Activated T-helper 2 cell treated with anti-CD3 and anti-CD28 coated beads, Interferon-gamma antibody, Interleukin-2, Interleukin-4, amounts not matched to agents 10 μg/mL and 5 μg/mL and 100 μg/mL, durations not matched to agents 14 hours and 24 hours and 36 hours (primary cell): ENCODE measurements at regions of chr3 and their contacts with region 1.

Region 1: GRCh38 chr3:60081381-60082095 is 1031.7 kb upstream of the CFAP20DC start:
- DNase-seq: no peak
- H3K4me3 Mint-ChIP-seq: peak overlapping the region; percentile 69
- H3K27ac Mint-ChIP-seq: peak overlapping the region; percentile 86
- H3K4me1 Mint-ChIP-seq: peaks cover 67% of the 10 kb centered on the region
- H3K27me3 Mint-ChIP-seq: no peaks in the 10 kb centered on the region

Region 2: GRCh38 chr3:59873576-59874230 is 207.8 kb before region 1 on chr3:
- intact Hi-C with region 1: loop called (anchors 5 kb)
- DNase-seq: no peak
- H3K4me3 Mint-ChIP-seq: no peak overlapping the region
- H3K27ac Mint-ChIP-seq: peak overlapping the region; percentile 9
- H3K4me1 Mint-ChIP-seq: peaks cover 52% of the 10 kb centered on the region
- H3K27me3 Mint-ChIP-seq: no peaks in the 10 kb centered on the region

Region 3: DNA sequence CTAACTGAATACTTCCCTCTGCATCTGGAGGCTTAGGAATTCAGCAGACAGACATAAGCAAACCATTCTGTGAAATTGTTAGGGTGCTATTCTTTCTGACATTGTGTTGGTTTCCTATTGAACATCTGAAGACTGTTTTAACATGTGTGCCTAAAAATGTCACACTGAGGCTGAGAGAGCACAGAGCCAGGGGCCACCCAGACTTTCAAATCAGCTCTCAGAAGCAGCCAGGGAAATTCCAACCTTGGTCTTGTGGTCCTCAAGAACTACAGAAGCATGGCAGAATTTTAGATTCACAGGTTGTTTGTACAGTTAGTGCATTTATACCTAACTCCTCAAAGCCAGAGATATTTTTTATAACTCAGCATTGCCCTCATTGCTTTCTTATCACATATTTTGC is 102.6 kb before region 1 on chr3:
- intact Hi-C with region 1: loop called (anchors 1 kb)
- DNase-seq: no peak
- H3K4me3 Mint-ChIP-seq: peak overlapping the region; percentile 35
- H3K27ac Mint-ChIP-seq: peak overlapping the region; percentile 92
- H3K4me1 Mint-ChIP-seq: peaks cover 26% of the 10 kb centered on the region
- H3K27me3 Mint-ChIP-seq: no peaks in the 10 kb centered on the region

Region 4: DNA sequence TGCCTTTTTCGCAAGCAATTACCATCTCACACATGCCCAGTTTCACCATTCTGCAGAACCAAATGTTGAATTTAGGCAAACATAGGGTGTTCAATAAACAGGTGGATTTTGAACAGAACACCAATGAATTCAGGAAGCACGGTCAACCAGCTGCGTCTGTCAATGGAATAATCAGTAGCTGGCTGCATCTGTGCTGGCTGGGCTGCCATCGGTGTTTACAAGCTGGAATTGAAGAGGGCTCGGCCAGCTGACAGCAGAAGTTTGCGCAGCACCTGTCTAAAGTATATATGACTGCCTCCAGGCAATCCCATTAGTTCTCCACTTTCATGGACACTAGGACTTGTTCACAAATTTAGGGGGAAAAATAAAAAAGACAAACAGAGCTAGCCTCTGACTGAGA is 35.3 kb before region 1 on chr3:
- intact Hi-C with region 1: loop called (anchors 1 kb)
- DNase-seq: no peak
- H3K4me3 Mint-ChIP-seq: no peak overlapping the region
- H3K27ac Mint-ChIP-seq: peak overlapping the region; percentile 61
- H3K4me1 Mint-ChIP-seq: peaks cover 62% of the 10 kb centered on the region
- H3K27me3 Mint-ChIP-seq: no peaks in the 10 kb centered on the region

Region 5: DNA sequence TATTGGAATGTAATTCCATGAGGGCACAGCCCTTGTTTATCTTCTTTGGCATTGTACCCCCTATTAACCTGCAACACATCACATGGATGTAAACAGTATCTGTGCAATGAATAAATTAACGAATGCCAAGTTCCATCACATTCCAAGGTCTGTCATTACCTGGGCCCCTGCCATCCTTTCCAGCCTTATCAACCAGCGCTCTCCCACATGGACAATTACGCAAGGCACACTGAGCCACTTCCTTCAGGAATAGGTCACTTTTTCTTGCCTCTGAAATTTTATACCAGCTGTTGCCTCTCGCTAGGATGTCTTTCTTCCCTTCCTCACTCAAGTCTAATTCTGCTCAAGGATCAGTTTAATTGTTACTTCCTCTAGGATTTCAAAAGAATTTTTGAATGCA is 20.1 kb after region 1 on chr3:
- intact Hi-C with region 1: loop called (anchors 2 kb)
- DNase-seq: no peak
- H3K4me3 Mint-ChIP-seq: no peak overlapping the region
- H3K27ac Mint-ChIP-seq: no peak overlapping the region
- H3K4me1 Mint-ChIP-seq: peaks cover 32% of the 10 kb centered on the region
- H3K27me3 Mint-ChIP-seq: no peaks in the 10 kb centered on the region

Region 6: DNA sequence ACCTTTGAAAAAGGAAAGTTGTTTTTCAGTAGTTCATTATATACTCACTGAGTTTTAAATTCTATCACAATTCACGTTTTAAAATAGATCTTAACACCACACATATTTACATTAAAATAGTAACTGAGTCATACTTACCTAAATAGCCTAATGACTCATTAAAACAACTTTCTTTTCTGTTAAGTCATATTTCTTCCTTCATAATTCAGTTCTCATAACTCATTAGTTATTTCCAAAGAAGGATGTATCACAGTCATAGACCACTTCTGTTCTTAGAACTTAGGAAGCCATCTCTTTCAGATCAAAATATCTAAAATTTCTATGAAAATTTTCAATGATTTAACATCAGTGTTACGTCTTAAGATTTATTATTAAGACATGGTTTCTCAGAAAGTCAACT is 283.8 kb after region 1 on chr3:
- intact Hi-C with region 1: loop called (anchors 2 kb)
- DNase-seq: no peak
- H3K4me3 Mint-ChIP-seq: no peak overlapping the region
- H3K27ac Mint-ChIP-seq: no peak overlapping the region
- H3K4me1 Mint-ChIP-seq: peaks cover 25% of the 10 kb centered on the region
- H3K27me3 Mint-ChIP-seq: no peaks in the 10 kb centered on the region

Region 7: DNA sequence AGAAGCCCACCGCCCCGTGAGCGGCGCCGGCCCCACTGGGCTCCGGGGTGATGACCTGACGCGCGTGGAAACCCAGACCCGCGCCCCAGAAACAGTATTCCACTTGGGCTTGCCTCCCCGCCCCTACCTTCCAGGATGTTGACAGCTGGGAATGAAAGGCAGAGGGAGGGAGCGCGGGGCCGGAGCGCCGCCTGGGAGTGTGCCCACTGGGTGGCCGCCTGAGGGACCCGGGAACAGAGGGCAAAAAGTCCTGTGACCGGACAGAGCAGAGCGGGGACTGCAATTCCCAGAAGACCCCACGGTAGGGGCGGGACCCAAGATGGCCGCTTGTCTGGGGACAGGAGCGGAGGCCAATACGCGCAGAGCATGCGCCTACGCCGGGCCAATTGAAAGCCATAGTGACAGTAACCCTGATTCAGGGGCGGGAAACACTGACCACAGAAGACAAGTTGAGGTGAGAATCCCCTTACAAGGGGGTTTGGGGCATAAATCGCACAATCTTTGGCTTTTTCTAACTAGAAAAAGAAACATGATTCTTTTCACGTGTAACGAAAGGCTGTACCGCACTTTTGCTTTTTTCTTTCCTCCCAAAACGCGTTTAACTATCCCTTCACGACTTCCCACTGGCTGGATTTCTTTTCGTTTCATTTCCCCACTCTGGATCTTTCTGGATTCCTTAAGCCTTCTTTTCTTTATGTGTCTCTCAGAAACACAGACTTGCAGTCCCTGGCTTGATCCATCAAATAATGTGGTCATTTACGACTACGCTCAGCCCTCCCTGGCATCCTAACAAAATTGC is 1169.8 kb after region 1 on chr3 and contains the start of gene FHIT:
- intact Hi-C with region 1: loop called (anchors 5 kb)
- DNase-seq: peak; percentile 89
- H3K4me3 Mint-ChIP-seq: peak within 1 kb of the TSS; percentile 91
- H3K27ac Mint-ChIP-seq: peak within 1 kb of the TSS; percentile 96
- H3K4me1 Mint-ChIP-seq: peaks cover 32% of the 10 kb centered on the region
- H3K27me3 Mint-ChIP-seq: peaks cover 11% of the 10 kb centered on the region
- total RNA-seq, gene FHIT: 20.5 and 29.9 TPM in 2 replicates